GM13977 (cell line): ENCODE measurements at regions of chrX and their contacts with region 1.

Region 1: DNA sequence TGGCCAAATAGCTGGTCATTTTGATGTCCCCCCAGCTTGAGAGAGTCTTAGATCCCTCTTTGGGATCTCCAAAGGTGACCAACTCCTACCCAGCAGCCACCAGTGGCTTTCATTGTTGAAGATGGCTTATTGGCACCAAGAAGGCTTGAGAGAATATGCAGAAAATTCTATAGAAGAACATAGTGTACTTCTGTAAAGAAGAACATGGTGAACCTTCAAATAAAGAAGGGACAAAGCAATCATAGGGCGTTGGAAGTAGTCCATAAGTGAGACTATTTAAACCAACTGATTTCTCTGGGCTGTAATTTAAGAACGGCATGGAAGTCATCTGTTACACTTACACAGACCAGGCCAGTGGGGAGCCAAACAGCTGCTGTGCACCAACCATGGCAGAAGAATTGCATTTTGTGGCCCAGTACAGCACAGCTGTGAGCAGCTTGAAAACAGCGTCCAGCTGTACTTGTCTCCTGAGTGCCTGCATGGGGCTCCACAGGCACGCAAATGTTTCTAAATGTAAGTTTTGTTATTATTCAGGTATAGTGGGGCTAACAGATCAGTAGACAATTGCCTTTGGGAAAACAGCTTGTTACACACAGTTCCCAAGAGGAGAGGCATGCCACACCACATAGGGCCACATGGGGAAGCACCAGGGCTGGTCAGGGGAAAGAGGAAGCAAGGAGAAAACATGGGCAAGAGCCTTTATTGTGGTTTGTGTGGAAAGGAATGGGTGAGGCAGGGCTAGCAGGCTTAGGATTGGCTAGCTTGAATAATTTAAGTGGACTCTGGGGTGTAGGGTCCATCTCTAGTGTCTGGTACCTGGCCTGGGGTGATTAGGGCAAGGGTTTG is 125.0 kb downstream of the ARHGAP6 start:
- DNase-seq: peak; percentile 7
- CTCF ChIP-seq: peak; percentile 47

Region 2: GRCh38 chrX:11667286-11667685 is 126.5 kb after region 1 on chrX:
- in situ Hi-C with region 1: no loop called
- DNase-seq: no peak
- CTCF ChIP-seq: no peak

Region 3: GRCh38 chrX:11770320-11770719 is 229.6 kb after region 1 on chrX:
- in situ Hi-C with region 1: loop called (anchors 5 kb)
- DNase-seq: peak; percentile 72
- CTCF ChIP-seq: peak; percentile 84